MCF 10A (cell line): ENCODE measurements at regions of chr1 and their contacts with region 1.

Region 1: GRCh38 chr1:224392411-224393249 is 36.0 kb downstream of the CNIH4 start:
- DNase-seq: no peak
- H3K4me3 Mint-ChIP-seq: no peak overlapping the region
- H3K27ac Mint-ChIP-seq: no peak overlapping the region
- H3K4me1 Mint-ChIP-seq: no peaks in the 10 kb centered on the region
- H3K27me3 Mint-ChIP-seq: no peaks in the 10 kb centered on the region
- CTCF ChIP-seq: no peak

Region 2: DNA sequence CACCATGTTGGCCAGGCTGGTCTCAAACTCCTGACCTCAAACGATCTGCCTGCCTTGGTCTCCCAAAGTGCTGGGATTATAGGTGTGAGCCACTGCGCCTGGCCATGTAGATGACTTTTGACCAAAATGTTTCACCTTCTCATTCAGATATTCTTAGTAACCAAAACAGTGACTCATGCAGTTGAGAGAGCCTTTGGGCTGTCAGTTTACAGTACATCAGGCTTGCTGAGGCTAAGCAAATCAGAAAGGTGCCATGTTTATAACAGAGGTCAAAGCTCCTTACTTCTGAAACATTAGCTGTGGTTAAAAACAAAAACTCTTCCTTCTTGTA is 15.0 kb before region 1 on chr1:
- CTCF ChIA-PET with region 1: interaction called, 3 read pairs
- POLR2A ChIA-PET with region 1: interaction called, 26 read pairs
- intact Hi-C with region 1: no loop called
- DNase-seq: peak; percentile 77
- H3K4me3 Mint-ChIP-seq: no peak overlapping the region
- H3K27ac Mint-ChIP-seq: peak overlapping the region; percentile 44
- H3K4me1 Mint-ChIP-seq: peaks cover 24% of the 10 kb centered on the region
- H3K27me3 Mint-ChIP-seq: no peaks in the 10 kb centered on the region
- CTCF ChIP-seq: no peak

Region 3: DNA sequence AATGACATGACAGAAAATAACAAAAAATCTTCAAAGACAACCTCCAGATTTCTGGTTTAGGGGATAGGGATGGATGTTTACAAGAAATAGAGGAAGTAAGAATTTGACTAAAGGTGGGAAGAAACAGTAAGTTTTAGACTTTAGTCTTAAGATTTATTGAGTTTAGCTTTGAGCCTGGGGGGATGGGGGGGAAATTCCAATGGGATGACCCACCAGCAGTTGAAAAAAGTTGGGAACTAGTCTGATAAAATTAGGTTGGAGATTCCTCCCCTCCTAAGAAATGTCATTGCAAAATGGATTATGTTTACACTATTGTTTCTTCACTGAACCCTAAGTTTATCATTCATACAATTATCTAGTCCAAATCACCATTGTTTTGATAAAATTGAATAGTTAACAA is 13.6 kb after region 1 on chr1:
- CTCF ChIA-PET with region 1: interaction called, 6 read pairs
- POLR2A ChIA-PET with region 1: interaction called, 26 read pairs
- intact Hi-C with region 1: no loop called
- DNase-seq: no peak
- H3K4me3 Mint-ChIP-seq: no peak overlapping the region
- H3K27ac Mint-ChIP-seq: peak overlapping the region; percentile 32
- H3K4me1 Mint-ChIP-seq: peaks cover 25% of the 10 kb centered on the region
- H3K27me3 Mint-ChIP-seq: no peaks in the 10 kb centered on the region
- CTCF ChIP-seq: no peak